MCF 10A (cell line): ENCODE measurements at regions of chr3 and their contacts with region 1.

Region 1: DNA sequence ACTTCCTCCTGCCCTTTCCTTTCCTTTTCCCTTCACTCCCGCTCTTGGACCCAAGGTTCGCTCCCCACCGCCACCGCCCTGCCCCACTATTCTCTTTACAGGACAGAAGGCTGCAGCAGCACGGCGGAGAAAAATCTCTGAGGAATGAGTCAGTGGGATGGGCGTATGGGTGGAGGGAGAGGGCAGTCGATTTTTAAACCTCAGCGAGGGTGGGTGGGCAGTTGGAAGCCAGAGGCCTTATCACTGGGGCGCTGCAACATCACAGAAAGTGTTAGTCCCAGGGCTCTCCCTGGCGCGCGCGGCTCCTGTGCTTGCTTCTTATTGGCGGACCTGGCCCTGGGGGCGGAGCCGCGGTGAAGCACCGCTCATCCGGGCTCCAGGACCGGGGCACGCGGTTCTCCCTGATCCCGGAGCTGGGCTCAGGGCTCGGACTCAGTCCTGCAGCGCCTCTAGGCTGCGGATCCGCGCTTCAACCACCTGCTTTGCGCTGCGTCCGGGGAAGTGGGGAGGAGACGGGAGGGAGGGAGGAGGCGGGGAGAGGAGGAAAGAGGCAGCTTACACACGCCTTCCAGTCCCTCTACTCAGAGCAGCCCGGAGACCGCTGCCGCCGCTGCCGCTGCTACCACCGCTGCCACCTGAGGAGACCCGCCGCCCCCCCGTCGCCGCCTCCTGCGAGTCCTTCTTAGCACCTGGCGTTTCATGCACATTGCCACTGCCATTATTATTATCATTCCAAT is at the start of gene ALCAM:
- DNase-seq: peak; percentile 99
- H3K4me3 Mint-ChIP-seq: peak within 1 kb of the TSS; percentile 100
- H3K27ac Mint-ChIP-seq: peak within 1 kb of the TSS; percentile 98
- H3K4me1 Mint-ChIP-seq: peaks cover 23% of the 10 kb centered on the region
- H3K27me3 Mint-ChIP-seq: no peaks in the 10 kb centered on the region
- CTCF ChIP-seq: peak; percentile 48
- total RNA-seq, gene ALCAM: 98.4 and 112 TPM in 2 replicates

Region 2: DNA sequence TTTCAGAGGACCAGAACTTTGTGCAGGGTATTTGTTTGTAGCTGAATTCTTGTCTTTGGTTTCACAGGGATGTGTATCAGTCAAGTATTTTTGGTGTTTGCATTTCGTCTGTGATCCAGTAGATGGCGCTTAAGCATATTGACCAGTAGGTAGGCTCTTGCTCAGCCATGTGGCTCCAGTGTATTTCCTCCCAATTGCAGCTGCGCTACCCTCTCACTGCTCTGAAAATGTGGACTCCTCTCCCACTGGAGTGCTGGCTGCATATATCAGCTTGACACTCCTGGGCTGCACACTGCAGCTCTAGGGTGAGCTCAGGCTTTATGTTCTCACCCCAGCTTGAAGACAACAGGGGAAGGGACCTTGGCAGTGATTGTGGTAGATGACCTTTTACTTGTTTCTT is 1264.1 kb before region 1 on chr3:
- CTCF ChIA-PET with region 1: interaction called, 3 read pairs
- POLR2A ChIA-PET with region 1: no interaction called
- intact Hi-C with region 1: loop called (anchors 1 kb)
- DNase-seq: peak; percentile 64
- H3K4me3 Mint-ChIP-seq: no peak overlapping the region
- H3K27ac Mint-ChIP-seq: no peak overlapping the region
- H3K4me1 Mint-ChIP-seq: peaks cover 13% of the 10 kb centered on the region
- H3K27me3 Mint-ChIP-seq: no peaks in the 10 kb centered on the region
- CTCF ChIP-seq: peak; percentile 75

Region 3: DNA sequence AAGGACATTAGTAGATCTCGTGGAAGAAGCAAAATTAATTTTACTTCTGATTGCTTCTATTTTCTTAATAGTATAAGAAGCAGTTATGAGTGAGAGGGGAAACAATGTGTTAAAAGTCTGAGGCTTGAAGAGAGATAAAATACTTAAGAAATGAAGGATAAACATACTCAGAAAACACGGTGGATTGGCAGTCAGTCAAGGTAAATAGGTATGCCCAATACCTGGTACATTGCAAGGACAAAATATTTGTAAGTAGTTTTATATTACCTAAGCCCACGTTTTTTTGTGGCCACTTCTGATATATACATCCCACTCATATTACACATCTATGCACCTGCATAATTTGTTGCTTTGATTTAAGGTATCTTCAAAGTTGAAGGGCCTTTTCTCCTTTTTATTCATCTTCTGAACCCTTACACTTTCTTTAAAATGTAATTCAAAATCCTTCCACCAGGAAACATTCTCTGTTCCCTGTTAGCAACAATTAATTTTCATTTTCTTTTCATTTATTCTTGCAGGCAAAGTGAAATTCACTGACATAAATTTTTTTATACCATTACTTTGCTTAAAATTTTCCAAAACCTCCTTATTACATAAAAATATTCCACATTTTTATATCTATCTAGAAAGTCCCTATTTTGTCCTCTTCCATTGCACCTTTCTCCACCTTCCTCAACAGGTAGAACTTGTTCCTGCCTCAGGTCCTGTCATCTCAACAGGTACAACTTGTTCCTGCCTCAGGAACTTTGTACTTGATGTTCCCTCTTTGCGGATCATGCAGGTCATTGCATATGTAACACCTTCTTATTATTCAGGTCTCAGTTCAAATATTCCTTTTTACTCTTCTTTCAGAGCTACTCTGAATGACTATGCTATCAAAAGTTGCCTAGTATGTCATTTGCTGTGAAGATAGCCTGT is 755.5 kb before region 1 on chr3:
- CTCF ChIA-PET with region 1: interaction called, 19 read pairs
- POLR2A ChIA-PET with region 1: interaction called, 3 read pairs
- intact Hi-C with region 1: no loop called
- DNase-seq: no peak
- H3K4me3 Mint-ChIP-seq: no peak overlapping the region
- H3K27ac Mint-ChIP-seq: no peak overlapping the region
- H3K4me1 Mint-ChIP-seq: peaks cover 11% of the 10 kb centered on the region
- H3K27me3 Mint-ChIP-seq: no peaks in the 10 kb centered on the region
- CTCF ChIP-seq: no peak

Region 4: DNA sequence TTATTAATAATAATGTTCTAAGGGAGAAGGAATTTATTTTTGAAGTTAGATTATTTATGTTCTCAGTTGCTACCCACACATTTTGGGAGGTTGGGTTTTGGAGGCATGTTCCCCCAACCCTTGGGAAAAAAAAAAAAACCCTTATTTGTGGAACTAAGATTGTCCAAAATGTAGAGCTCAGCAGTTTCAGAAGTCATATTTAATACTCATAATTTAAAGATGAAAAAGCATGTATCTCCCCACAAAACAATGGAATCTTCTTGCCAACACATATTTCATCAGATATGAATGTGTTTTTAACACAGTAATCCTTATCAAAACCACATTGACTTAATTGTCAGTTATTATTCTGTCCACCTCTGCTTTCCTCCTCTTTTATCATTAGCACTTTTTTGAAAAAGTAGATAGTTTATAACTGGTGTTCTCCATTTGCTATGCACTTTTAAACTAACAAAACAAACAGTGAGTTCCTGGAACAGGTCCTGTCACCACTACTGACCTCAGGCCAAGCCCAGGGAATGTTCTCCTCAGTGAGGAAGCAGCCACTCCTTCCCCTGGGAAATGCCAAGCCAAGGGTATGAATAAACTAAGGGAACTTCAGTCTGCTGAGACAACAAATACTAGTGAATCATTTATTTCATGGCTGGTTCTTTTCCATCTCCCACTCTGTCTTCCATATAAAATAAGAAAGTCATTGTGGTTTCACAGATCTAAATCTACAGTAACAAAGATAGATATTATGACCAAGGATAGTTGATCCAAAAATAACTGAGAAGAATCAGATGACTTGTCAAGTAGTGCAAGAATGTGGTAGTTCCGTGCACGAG is 414.1 kb before region 1 on chr3:
- CTCF ChIA-PET with region 1: interaction called, 4 read pairs
- POLR2A ChIA-PET with region 1: interaction called, 16 read pairs
- intact Hi-C with region 1: loop called (anchors 5 kb)
- DNase-seq: peak; percentile 85
- H3K4me3 Mint-ChIP-seq: peak overlapping the region; percentile 2
- H3K27ac Mint-ChIP-seq: peak overlapping the region; percentile 95
- H3K4me1 Mint-ChIP-seq: peaks cover 26% of the 10 kb centered on the region
- H3K27me3 Mint-ChIP-seq: no peaks in the 10 kb centered on the region
- CTCF ChIP-seq: no peak

Region 5: DNA sequence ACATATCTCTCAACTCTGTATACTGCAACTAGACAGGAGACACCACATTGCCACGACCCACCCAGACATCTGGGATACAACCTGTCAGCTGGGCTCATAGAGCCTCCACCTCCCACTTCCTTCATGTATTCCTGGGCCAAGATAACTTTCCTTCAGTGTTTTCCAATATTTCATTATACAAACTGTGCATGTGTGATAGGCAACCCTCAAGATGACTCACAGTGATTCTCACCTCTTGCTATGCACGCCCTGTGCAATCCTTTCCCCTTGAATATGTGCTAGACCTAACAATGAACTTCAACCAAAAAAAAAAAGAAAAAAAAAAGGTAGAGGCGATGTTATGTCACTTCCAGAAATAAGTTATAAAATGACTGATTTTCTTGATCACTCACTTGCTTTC is 137.8 kb before region 1 on chr3:
- CTCF ChIA-PET with region 1: no interaction called
- POLR2A ChIA-PET with region 1: interaction called, 6 read pairs
- intact Hi-C with region 1: loop called (anchors 1 kb)
- DNase-seq: peak; percentile 18
- H3K4me3 Mint-ChIP-seq: no peak overlapping the region
- H3K27ac Mint-ChIP-seq: peak overlapping the region; percentile 21
- H3K4me1 Mint-ChIP-seq: peaks cover 14% of the 10 kb centered on the region
- H3K27me3 Mint-ChIP-seq: no peaks in the 10 kb centered on the region
- CTCF ChIP-seq: no peak

Region 6: GRCh38 chr3:105518806-105519418 is 152.4 kb after region 1 on chr3:
- CTCF ChIA-PET with region 1: interaction called, 58 read pairs
- POLR2A ChIA-PET with region 1: interaction called, 40 read pairs
- intact Hi-C with region 1: loop called (anchors 1 kb)
- DNase-seq: peak; percentile 74
- H3K4me3 Mint-ChIP-seq: no peak overlapping the region
- H3K27ac Mint-ChIP-seq: no peak overlapping the region
- H3K4me1 Mint-ChIP-seq: no peaks in the 10 kb centered on the region
- H3K27me3 Mint-ChIP-seq: no peaks in the 10 kb centered on the region
- CTCF ChIP-seq: peak; percentile 60